ENCODE measurements at regions of chr3 and their contacts with region 1.

Region 1: DNA sequence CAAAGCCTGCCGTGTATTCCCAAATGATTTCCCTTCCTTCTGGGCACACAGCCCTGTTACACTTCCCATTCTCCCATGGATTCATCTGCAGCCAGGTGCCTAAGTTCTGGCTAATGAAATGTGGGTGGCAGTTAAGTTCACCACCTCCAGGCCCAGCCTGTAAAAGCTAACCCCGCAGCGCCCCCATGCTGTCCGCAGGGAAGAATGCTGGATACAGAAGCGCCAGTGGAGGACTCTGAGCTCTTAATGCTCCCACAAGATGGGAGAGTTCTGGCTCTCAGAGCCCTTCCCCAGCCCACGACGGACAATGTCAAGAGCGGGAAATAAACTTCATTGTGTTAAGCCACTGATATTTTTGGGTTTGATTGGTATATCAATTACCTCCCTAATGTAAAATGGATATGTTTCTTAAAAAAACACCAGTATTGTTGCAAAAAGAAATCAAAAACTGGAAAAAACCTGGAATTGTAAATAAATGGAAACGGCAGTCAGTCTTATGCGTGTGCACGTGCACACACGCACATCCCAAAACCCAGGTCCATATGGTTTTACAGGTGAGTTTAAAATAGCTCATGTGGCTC is 37.7 kb upstream of the FGD5 start:
- DNase-seq: no peak
- H3K4me3 ChIP-seq: no peak overlapping the region
- H3K27me3 ChIP-seq: no peaks in the 10 kb centered on the region; the same call in 1 of the 2 replicates
- CTCF ChIP-seq: peak; percentile 67

Region 2: GRCh38 chr3:14672588-14672987 is 108.4 kb before region 1 on chr3:
- CTCF ChIA-PET with region 1: interaction called, 22 read pairs
- POLR2A ChIA-PET with region 1: no interaction called
- DNase-seq: no peak
- H3K4me3 ChIP-seq: no peak overlapping the region
- H3K27me3 ChIP-seq: no peaks in the 10 kb centered on the region
- CTCF ChIP-seq: no peak

Region 3: GRCh38 chr3:14730703-14731382 is 50.2 kb before region 1 on chr3:
- CTCF ChIA-PET with region 1: no interaction called
- POLR2A ChIA-PET with region 1: no interaction called
- DNase-seq: no peak
- H3K4me3 ChIP-seq: no peak overlapping the region
- H3K27me3 ChIP-seq: peaks cover 2% of the 10 kb centered on the region
- CTCF ChIP-seq: no peak

Measured in BJ (cell line).